Activated T-helper 1 cell treated with anti-CD3 and anti-CD28 coated beads, Interleukin-12 subunit alpha, Interleukin-12 subunit beta, Interleukin-2, Interleukin-4 antibody, amounts not matched to agents 30 ng/mL and 10 ng/mL and 1 ng/mL, durations not matched to agents 14 hours and 24 hours and 36 hours (primary cell): ENCODE measurements at regions of chr14 and their contacts with region 1.

Region 1: DNA sequence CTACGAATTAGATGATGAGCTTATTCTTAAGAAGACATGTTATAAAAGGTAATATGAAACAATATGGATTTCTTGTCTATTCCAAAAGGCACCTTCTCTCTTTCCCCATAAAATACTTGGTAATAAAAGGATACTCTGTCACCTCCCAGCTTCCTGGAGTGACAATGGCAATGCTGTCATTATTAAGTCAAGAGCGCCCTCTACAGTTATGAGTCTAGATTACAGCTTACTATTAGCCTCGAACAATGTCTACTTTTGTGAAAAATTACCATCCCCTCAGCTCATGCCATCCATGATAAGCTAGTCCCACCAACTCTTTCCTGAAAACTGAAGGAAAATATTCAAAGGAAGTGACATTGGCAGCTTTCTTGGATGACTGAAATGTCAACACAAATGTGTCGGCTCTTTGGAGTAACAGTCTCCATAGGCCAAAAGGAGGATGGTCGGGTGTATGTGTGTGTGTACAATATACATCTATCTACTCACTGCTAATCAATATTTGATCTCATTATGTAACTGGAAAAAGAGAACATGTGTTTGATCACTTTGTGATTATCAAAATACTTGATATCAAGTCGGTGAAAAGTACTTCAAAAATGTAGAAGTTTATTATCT is 48.7 kb upstream of the CDKN3 start:
- DNase-seq: no peak
- H3K4me3 Mint-ChIP-seq: no peak overlapping the region
- H3K27ac Mint-ChIP-seq: no peak overlapping the region
- H3K4me1 Mint-ChIP-seq: no peaks in the 10 kb centered on the region
- H3K27me3 Mint-ChIP-seq: peaks cover 15% of the 10 kb centered on the region

Region 2: GRCh38 chr14:53295985-53296582 is 1052.0 kb before region 1 on chr14:
- intact Hi-C with region 1: loop called (anchors 2 kb)
- DNase-seq: no peak
- H3K4me3 Mint-ChIP-seq: no peak overlapping the region
- H3K27ac Mint-ChIP-seq: no peak overlapping the region
- H3K4me1 Mint-ChIP-seq: no peaks in the 10 kb centered on the region
- H3K27me3 Mint-ChIP-seq: no peaks in the 10 kb centered on the region

Region 3: GRCh38 chr14:53432378-53432802 is 915.7 kb before region 1 on chr14:
- intact Hi-C with region 1: loop called (anchors 5 kb)
- DNase-seq: no peak
- H3K4me3 Mint-ChIP-seq: no peak overlapping the region
- H3K27ac Mint-ChIP-seq: no peak overlapping the region
- H3K4me1 Mint-ChIP-seq: no peaks in the 10 kb centered on the region
- H3K27me3 Mint-ChIP-seq: peaks cover 3% of the 10 kb centered on the region

Region 4: DNA sequence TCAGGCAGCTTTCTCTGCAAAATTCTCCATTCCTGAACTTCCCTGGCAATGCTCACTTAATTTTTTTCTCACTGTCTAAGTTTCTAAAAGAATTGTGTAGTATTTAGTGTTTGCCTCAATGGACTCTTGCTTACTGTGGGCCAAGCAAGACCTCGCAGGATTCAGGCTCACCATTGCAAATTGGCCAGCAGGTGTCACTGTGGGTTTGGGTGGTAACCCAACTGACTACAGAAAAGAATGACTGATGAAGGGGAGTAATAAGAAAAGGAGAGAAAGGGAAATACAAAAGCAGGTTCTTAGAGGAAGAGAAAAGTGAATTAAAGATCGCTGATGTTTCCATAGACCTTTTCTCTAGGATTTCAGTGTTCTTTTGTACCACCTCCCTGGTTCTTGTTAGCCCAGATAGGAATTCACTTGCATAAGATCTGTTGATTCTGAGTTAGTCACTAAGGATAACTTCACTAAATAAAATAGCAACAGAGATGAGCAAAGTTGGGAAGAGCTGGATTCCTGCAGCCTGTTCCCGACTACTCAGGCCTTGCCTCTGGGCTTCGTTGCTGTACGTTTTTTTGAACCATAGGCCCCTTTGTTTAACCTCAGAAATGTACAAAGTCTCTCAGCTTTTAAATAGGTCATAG is 808.5 kb before region 1 on chr14:
- intact Hi-C with region 1: loop called (anchors 1 kb)
- DNase-seq: peak; percentile 5
- H3K4me3 Mint-ChIP-seq: no peak overlapping the region
- H3K27ac Mint-ChIP-seq: no peak overlapping the region
- H3K4me1 Mint-ChIP-seq: no peaks in the 10 kb centered on the region
- H3K27me3 Mint-ChIP-seq: no peaks in the 10 kb centered on the region

Region 5: GRCh38 chr14:54175298-54175942 is 172.7 kb before region 1 on chr14:
- intact Hi-C with region 1: loop called (anchors 10 kb)
- DNase-seq: peak; percentile 17
- H3K4me3 Mint-ChIP-seq: no peak overlapping the region
- H3K27ac Mint-ChIP-seq: no peak overlapping the region
- H3K4me1 Mint-ChIP-seq: no peaks in the 10 kb centered on the region
- H3K27me3 Mint-ChIP-seq: peaks cover 23% of the 10 kb centered on the region

Region 6: DNA sequence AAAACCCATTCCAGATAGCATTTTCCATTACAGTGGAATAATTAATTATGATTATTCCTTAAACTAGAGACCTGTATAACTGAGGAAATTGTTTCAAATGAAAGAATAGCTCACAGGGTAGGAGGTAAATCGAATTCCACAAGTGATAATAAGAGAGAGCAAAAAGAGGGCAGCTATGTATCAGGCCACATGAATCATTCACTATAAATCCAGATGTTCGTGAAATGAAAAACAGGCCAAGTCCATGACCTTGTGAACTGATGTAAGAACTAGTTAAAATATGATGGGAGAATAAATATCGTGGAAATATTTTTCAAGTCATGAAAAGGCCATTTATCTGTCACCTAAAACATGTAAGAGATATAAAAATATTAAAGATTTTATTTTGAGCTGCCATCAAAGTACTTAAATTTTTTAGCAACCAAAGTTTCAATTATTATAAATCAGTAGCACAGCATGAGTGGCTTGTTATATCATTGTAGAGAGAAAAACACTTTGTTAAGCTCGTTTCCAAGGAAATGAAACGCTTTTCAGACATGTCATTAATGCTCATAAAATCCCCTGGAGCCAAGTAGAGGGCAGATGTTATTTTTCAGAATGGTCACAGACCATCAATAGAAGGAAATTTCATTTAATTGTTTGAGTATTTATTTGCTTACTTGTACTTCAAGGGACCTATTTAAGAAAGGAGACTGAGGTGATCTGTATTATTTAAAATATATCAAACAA is 71.9 kb before region 1 on chr14:
- intact Hi-C with region 1: no loop called
- DNase-seq: no peak
- H3K4me3 Mint-ChIP-seq: no peak overlapping the region
- H3K27ac Mint-ChIP-seq: no peak overlapping the region
- H3K4me1 Mint-ChIP-seq: no peaks in the 10 kb centered on the region
- H3K27me3 Mint-ChIP-seq: peaks cover 5% of the 10 kb centered on the region

Region 7: GRCh38 chr14:54329082-54329695 is 18.9 kb before region 1 on chr14:
- intact Hi-C with region 1: no loop called
- DNase-seq: no peak
- H3K4me3 Mint-ChIP-seq: no peak overlapping the region
- H3K27ac Mint-ChIP-seq: no peak overlapping the region
- H3K4me1 Mint-ChIP-seq: no peaks in the 10 kb centered on the region
- H3K27me3 Mint-ChIP-seq: peaks cover 10% of the 10 kb centered on the region

Region 8: DNA sequence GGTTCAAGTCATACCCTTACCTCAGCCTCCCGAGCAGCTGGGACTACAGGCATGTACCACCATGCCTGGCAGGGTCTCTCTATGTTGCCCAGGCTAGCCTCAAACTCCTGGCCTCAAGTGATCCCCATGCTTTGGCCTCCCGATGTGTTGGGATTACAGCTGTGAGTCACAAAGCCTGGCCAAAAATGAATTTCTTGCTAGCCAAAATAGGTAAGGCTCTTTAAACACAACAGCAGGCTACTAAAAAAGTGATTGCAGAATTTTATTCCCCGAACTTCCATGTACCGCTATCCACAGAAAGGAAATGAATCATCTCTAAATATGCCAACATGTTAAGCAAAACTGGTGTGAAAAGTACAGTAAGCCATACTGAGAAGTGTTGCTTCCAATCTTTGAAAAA is 628.2 kb after region 1 on chr14:
- intact Hi-C with region 1: no loop called
- DNase-seq: no peak
- H3K4me3 Mint-ChIP-seq: no peak overlapping the region
- H3K27ac Mint-ChIP-seq: no peak overlapping the region
- H3K4me1 Mint-ChIP-seq: peaks cover 17% of the 10 kb centered on the region
- H3K27me3 Mint-ChIP-seq: no peaks in the 10 kb centered on the region